Ascending aorta (tissue), 2 donors: ENCODE measurements at regions of chr3 and their contacts with region 1.

Region 1: DNA sequence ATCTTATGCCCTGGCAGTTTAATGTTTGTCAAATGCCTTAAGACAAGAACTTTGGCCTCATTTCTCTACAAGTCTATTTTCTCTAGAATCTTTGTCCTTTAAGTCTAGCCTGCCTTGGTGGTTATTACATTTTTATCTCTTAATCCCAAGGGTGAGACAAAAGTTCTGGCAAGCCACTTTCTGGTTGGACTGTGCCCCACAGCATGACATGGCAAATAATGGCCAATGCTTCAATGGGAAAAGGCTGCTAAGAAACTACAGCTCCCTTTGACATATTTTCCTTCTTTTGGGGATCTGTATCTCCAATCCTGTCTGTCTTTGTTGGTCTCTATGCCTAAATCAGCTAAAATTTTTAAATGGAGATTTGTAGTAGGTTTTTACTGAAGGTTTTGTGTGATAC is 181.6 kb upstream of the MBNL1 start:
- DNase-seq: no peak
- H3K4me3 ChIP-seq: no peak overlapping the region
- H3K27ac ChIP-seq: peak overlapping the region; percentile 72 to 75
- H3K4me1 ChIP-seq: peaks cover 0 to 4% of the 10 kb centered on the region in 2 donors
- H3K27me3 ChIP-seq: no peaks in the 10 kb centered on the region
- CTCF ChIP-seq: no peak

Region 2: DNA sequence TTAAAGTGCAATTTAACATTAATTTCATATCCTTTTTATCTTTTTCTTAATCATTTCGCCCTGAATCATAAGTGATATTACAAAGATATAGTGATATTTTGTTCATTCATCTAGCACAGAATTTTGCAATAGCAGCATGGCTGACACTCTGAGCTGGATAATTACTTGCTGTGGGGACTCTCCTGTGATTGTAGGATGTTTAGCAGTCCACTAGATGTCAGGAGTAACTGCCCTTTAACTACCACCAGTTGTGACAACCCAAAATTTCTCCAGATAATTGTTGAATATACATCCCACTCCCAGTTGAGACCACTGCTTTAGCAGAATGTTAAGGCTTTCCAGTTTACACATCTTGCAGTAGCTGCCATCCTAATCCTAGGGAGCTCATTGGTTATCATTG is 15.2 kb before region 1 on chr3:
- intact Hi-C with region 1: no loop called
- DNase-seq: no peak
- H3K4me3 ChIP-seq: no peak overlapping the region
- H3K27ac ChIP-seq: no peak overlapping the region
- H3K4me1 ChIP-seq: peaks cover 0 to 3% of the 10 kb centered on the region in 2 donors
- H3K27me3 ChIP-seq: no peaks in the 10 kb centered on the region
- CTCF ChIP-seq: peak; percentile 37 to 48 (median 45)

Region 3: GRCh38 chr3:152149832-152150231 is 62.7 kb after region 1 on chr3:
- intact Hi-C with region 1: loop called (anchors 5 kb)
- DNase-seq: no peak
- H3K4me3 ChIP-seq: no peak overlapping the region
- H3K27ac ChIP-seq: peak overlapping the region; percentile 34 to 55
- H3K4me1 ChIP-seq: peaks cover 0 to 2% of the 10 kb centered on the region in 2 donors
- H3K27me3 ChIP-seq: no peaks in the 10 kb centered on the region
- CTCF ChIP-seq: no peak